GM12878 (cell line): ENCODE measurements at regions of chr12 and their contacts with region 1.

Region 1: GRCh38 chr12:50111693-50112455 is at the start of gene COX14:
- DNase-seq: peak; percentile 99
- ATAC-seq: peak; percentile 87
- H3K4me3 ChIP-seq: peak within 1 kb of the TSS; percentile 99
- H3K27ac ChIP-seq: peak within 1 kb of the TSS; percentile 90
- H3K4me1 ChIP-seq: peaks cover 21% of the 10 kb centered on the region
- H3K27me3 ChIP-seq: no peaks in the 10 kb centered on the region
- CTCF ChIP-seq: peak; percentile 94
- EP300 ChIP-seq: no peak; a peak in 1 of 4 replicates
- POLR2A ChIP-seq: peak; percentile 99
- RAD21 ChIP-seq: peak; percentile 44; the same call in 1 of the 2 replicates
- polyA plus RNA-seq, gene COX14: 323 to 361 TPM

Region 2: GRCh38 chr12:49636979-49637755 is 474.7 kb before region 1 on chr12:
- CTCF ChIA-PET with region 1: no interaction called
- POLR2A ChIA-PET with region 1: no interaction called
- RAD21 ChIA-PET with region 1: no interaction called
- SMC1A ChIA-PET with region 1: no interaction called
- in situ Hi-C with region 1: no loop called
- intact Hi-C with region 1: no loop called
- DNase-seq: no peak
- ATAC-seq: peak; percentile 93
- H3K4me3 ChIP-seq: no peak overlapping the region
- H3K27ac ChIP-seq: no peak overlapping the region
- H3K4me1 ChIP-seq: peaks cover 3% of the 10 kb centered on the region; the same call in 1 of the 2 replicates
- H3K27me3 ChIP-seq: no peaks in the 10 kb centered on the region
- CTCF ChIP-seq: peak; percentile 73 to 77 (median 74)
- EP300 ChIP-seq: no peak
- POLR2A ChIP-seq: no peak; the same call in 1 of the 2 replicates
- RAD21 ChIP-seq: peak; percentile 84

Region 3: GRCh38 chr12:49967042-49967776 is 144.7 kb before region 1 on chr12:
- CTCF ChIA-PET with region 1: interaction called, 12 read pairs
- POLR2A ChIA-PET with region 1: no interaction called
- RAD21 ChIA-PET with region 1: interaction called, 3 read pairs
- SMC1A ChIA-PET with region 1: interaction called, 3 read pairs
- in situ Hi-C with region 1: no loop called
- intact Hi-C with region 1: no loop called
- DNase-seq: peak; percentile 15
- ATAC-seq: peak; percentile 94
- H3K4me3 ChIP-seq: no peak overlapping the region
- H3K27ac ChIP-seq: no peak overlapping the region
- H3K4me1 ChIP-seq: peaks cover 8% of the 10 kb centered on the region
- H3K27me3 ChIP-seq: peaks cover 5 to 6% of the 10 kb centered on the region in 2 experiments; a peak in 3 of 4 replicates
- CTCF ChIP-seq: peak; percentile 88 to 96 (median 95)
- EP300 ChIP-seq: no peak
- POLR2A ChIP-seq: no peak
- RAD21 ChIP-seq: peak; percentile 87

Region 4: GRCh38 chr12:50084775-50085614 is 26.9 kb before region 1 on chr12 and contains the start of gene SMARCD1:
- CTCF ChIA-PET with region 1: interaction called, 250 read pairs
- POLR2A ChIA-PET with region 1: interaction called, 39 read pairs
- RAD21 ChIA-PET with region 1: interaction called, 66 read pairs
- SMC1A ChIA-PET with region 1: interaction called, 32 read pairs
- in situ Hi-C with region 1: no loop called
- intact Hi-C with region 1: loop called (anchors 1 kb)
- DNase-seq: peak; percentile 66
- ATAC-seq: peak; percentile 91
- H3K4me3 ChIP-seq: peak within 1 kb of the TSS; percentile 76
- H3K27ac ChIP-seq: peak within 1 kb of the TSS; percentile 85
- H3K4me1 ChIP-seq: no peaks in the 10 kb centered on the region
- H3K27me3 ChIP-seq: no peaks in the 10 kb centered on the region
- CTCF ChIP-seq: peak; percentile 65 to 92 (median 72)
- EP300 ChIP-seq: no peak; a peak in 1 of 4 replicates
- POLR2A ChIP-seq: peak; percentile 78
- RAD21 ChIP-seq: no peak
- polyA plus RNA-seq, gene SMARCD1: 1.4 to 2.9 TPM

Region 5: DNA sequence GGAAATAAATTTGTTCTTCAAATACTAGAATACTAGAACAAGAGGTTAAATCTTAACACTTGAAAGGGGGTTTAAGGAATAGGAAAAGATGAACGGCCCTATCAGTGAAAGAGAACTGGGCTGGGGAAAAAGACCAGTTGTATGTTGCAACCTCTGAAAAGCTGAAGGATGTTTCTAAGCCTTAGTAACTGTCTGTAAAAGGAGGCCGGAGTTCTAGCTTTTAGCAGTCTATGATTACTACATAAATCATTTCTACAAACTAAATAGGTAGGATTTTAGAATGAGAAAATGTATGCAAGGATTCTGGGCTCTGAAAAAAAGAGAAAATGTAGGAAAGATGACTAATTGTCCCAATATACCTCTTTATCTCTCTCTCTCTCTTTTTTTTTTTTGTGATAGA is 50.4 kb after region 1 on chr12:
- CTCF ChIA-PET with region 1: interaction called, 257 read pairs
- POLR2A ChIA-PET with region 1: interaction called, 72 read pairs
- RAD21 ChIA-PET with region 1: interaction called, 48 read pairs
- SMC1A ChIA-PET with region 1: interaction called, 36 read pairs
- in situ Hi-C with region 1: no loop called
- intact Hi-C with region 1: loop called (anchors 1 kb)
- DNase-seq: no peak
- ATAC-seq: no peak
- H3K4me3 ChIP-seq: no peak overlapping the region
- H3K27ac ChIP-seq: no peak overlapping the region
- H3K4me1 ChIP-seq: no peaks in the 10 kb centered on the region
- H3K27me3 ChIP-seq: no peaks in the 10 kb centered on the region
- CTCF ChIP-seq: no peak
- EP300 ChIP-seq: no peak
- POLR2A ChIP-seq: no peak
- RAD21 ChIP-seq: no peak

Region 6: DNA sequence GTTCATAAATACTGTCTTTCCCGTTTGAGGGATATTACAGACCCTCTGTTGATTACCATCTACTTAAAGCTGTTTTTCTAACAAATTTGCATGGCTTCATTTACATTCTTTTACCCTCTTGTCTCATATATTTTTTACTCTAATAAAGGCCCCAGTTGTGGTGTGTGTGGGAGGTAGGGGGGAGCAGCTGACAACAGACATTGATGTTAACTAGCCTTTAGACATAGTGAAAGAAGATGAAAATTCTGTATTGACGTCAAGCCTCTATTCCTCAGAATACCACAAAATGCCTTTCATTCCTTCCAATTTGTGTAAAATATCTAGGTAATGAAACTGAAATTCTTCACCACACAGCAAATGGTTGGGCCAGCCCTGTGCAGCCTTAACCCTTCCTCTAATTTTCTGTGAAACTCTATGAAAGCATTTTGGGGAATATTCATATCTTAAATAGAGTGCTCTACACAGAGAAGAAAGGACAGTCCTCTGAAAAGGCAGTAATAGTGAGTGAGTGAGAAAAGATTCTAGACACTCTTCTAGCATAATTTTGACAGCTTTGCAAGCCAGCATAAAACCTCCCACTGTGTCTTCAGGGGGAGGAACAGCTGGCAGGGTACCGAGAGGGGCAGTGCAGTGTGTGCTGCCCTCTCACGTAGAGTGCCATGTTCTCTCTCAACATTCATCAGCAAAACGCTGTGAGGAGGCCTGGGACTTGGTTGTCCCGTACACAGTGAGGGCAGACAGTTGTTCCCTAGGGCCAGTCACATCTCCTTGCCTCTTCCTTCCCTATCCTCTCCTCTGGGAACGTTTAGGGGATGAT is 75.4 kb after region 1 on chr12:
- CTCF ChIA-PET with region 1: interaction called, 13 read pairs
- POLR2A ChIA-PET with region 1: no interaction called
- RAD21 ChIA-PET with region 1: interaction called, 3 read pairs
- SMC1A ChIA-PET with region 1: interaction called, 6 read pairs
- in situ Hi-C with region 1: no loop called
- intact Hi-C with region 1: no loop called
- DNase-seq: peak; percentile 47
- ATAC-seq: peak; percentile 91
- H3K4me3 ChIP-seq: no peak overlapping the region
- H3K27ac ChIP-seq: peak overlapping the region; percentile 64
- H3K4me1 ChIP-seq: peaks cover 28% of the 10 kb centered on the region
- H3K27me3 ChIP-seq: no peaks in the 10 kb centered on the region
- CTCF ChIP-seq: no peak
- EP300 ChIP-seq: peak; percentile 94 to 96; a peak in 3 of 4 replicates
- POLR2A ChIP-seq: no peak
- RAD21 ChIP-seq: 0 out of 2 replicates have a peak, but pooled peaks have one; percentile 6

Region 7: DNA sequence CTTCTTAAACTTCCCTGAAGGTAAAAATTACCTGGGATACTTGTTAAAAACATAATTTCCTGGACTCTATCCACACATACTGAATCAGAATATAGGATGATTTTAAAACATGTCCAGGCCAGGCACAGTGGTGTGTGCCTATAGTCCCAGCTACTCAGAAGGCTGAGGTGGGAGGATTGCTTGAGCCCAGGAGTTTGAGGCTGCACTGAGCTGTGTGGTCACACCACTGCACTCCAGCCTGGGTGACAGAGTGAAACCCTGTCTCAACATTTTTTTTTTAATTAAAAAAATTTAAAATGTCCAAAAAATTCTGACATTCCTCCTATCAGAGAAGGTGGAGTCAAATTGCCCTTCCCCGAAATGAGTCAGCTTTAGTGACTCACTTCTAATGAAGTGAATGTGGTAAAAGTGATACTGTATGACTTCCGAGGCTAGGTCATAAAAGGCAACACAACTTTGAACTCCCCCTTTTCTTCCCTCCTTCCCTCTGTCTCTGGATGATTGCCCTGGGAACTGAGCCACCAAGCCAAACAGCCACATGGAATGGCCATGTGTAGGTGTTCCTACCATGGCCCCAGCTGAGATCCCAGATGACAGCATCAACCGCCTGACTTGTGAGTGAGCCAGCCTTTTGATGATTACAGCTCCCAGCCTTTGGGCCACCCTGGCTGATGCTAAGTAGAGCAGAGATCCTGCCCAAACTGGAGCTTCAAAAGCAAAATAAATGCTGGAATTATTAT is 135.2 kb after region 1 on chr12:
- CTCF ChIA-PET with region 1: interaction called, 11 read pairs
- POLR2A ChIA-PET with region 1: interaction called, 3 read pairs
- RAD21 ChIA-PET with region 1: interaction called, 10 read pairs
- SMC1A ChIA-PET with region 1: interaction called, 4 read pairs
- in situ Hi-C with region 1: no loop called
- intact Hi-C with region 1: no loop called
- DNase-seq: peak; percentile 62
- ATAC-seq: peak; percentile 80
- H3K4me3 ChIP-seq: peak overlapping the region; percentile 5; the same call in 1 of the 2 replicates
- H3K27ac ChIP-seq: peak overlapping the region; percentile 83
- H3K4me1 ChIP-seq: peaks cover 38% of the 10 kb centered on the region
- H3K27me3 ChIP-seq: no peaks in the 10 kb centered on the region
- CTCF ChIP-seq: no peak
- EP300 ChIP-seq: peak in 1 of 2 experiments; percentile 65; a peak in 1 of 4 replicates
- POLR2A ChIP-seq: no peak
- RAD21 ChIP-seq: no peak

Region 8: GRCh38 chr12:50550530-50551223 is 438.8 kb after region 1 on chr12:
- CTCF ChIA-PET with region 1: no interaction called
- POLR2A ChIA-PET with region 1: no interaction called
- RAD21 ChIA-PET with region 1: no interaction called
- SMC1A ChIA-PET with region 1: no interaction called
- in situ Hi-C with region 1: no loop called
- intact Hi-C with region 1: no loop called
- DNase-seq: no peak
- ATAC-seq: no peak
- H3K4me3 ChIP-seq: no peak overlapping the region
- H3K27ac ChIP-seq: no peak overlapping the region
- H3K4me1 ChIP-seq: no peaks in the 10 kb centered on the region; the same call in 1 of the 2 replicates
- H3K27me3 ChIP-seq: no peaks in the 10 kb centered on the region
- CTCF ChIP-seq: no peak
- EP300 ChIP-seq: no peak
- POLR2A ChIP-seq: no peak
- RAD21 ChIP-seq: no peak